H1 (cell line): ENCODE measurements at regions of chr15 and their contacts with region 1.

Region 1: DNA sequence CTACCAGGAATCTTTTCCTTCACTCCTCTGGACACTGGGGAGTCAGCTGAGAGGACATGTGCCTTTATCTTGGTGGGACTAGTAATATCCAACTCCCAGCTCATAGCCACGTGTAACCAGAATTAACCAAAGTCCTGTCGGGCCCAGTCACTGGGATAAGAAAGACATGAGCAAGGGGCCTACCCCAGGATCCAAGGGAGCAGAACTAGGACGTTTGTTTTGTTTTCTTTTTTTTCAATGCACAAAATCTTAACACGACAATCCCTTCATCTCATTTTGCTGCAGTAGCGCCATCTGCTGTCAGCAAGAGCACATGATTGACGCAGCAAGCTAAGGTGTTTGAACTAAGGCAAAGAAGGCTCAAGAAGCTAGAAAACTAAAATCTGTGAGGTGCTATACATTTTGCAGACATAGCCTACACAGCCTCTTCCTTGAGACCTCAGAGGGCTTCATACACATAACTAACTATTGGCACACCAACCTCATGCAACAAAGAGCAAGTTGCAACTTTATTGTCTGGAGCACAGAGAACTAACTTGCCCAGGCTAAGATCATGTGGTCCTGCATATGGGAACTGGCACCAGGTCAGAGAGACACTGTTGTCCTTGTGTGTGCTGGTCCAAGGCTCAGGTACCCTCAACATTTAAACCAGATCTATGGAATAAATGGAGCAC is 43.6 kb downstream of the RLBP1 start:
- DNase-seq: peak in 1 of 2 experiments; percentile 63
- H3K4me3 ChIP-seq: no peak overlapping the region
- H3K27ac ChIP-seq: no peak overlapping the region
- H3K4me1 ChIP-seq: no peaks in the 10 kb centered on the region
- H3K27me3 ChIP-seq: no peaks in the 10 kb centered on the region
- CTCF ChIP-seq: peak; percentile 41 to 90 (median 83)
- EP300 ChIP-seq: no peak
- POLR2A ChIP-seq: no peak
- RAD21 ChIP-seq: peak; percentile 86

Region 2: DNA sequence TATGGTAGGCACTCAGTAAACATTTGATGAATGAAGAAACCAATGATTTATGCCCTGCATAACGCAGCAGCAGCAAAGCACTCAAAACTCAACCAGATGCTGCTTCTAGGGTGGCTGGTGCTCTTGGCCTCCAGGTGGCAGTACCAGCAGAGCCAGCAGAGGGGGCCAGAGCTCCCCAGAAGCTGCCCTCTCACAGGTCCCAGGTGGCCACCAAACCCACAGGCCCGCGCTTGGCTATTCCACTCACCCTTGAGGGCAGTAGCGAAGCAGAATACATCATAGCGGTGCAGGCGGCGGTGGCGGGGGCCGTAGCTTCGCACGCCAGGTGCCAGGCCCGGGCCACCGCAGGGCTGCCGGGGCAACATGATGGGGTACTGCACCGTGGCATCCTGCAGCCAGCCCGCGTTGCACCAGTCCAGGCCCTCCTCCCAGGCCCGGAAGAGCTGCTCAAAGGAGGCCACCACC is 299.0 kb before region 1 on chr15:
- CTCF ChIA-PET with region 1: interaction called, 18 read pairs
- POLR2A ChIA-PET with region 1: no interaction called
- DNase-seq: peak in 1 of 2 experiments; percentile 89
- H3K4me3 ChIP-seq: no peak overlapping the region
- H3K27ac ChIP-seq: no peak overlapping the region
- H3K4me1 ChIP-seq: peaks cover 0 to 6% (median under 1%) of the 10 kb centered on the region in 4 experiments; a peak in 3 of 7 replicates
- H3K27me3 ChIP-seq: no peaks in the 10 kb centered on the region
- CTCF ChIP-seq: peak; percentile 89 to 96 (median 95)
- EP300 ChIP-seq: no peak
- POLR2A ChIP-seq: no peak
- RAD21 ChIP-seq: peak; percentile 80 to 87

Region 3: GRCh38 chr15:89143503-89144162 is 34.1 kb before region 1 on chr15:
- CTCF ChIA-PET with region 1: interaction called, 41 read pairs
- POLR2A ChIA-PET with region 1: no interaction called
- DNase-seq: no peak
- H3K4me3 ChIP-seq: no peak overlapping the region
- H3K27ac ChIP-seq: no peak overlapping the region
- H3K4me1 ChIP-seq: no peaks in the 10 kb centered on the region; a peak in 1 of 7 replicates
- H3K27me3 ChIP-seq: no peaks in the 10 kb centered on the region
- CTCF ChIP-seq: no peak
- EP300 ChIP-seq: no peak
- POLR2A ChIP-seq: no peak
- RAD21 ChIP-seq: no peak

Region 4: DNA sequence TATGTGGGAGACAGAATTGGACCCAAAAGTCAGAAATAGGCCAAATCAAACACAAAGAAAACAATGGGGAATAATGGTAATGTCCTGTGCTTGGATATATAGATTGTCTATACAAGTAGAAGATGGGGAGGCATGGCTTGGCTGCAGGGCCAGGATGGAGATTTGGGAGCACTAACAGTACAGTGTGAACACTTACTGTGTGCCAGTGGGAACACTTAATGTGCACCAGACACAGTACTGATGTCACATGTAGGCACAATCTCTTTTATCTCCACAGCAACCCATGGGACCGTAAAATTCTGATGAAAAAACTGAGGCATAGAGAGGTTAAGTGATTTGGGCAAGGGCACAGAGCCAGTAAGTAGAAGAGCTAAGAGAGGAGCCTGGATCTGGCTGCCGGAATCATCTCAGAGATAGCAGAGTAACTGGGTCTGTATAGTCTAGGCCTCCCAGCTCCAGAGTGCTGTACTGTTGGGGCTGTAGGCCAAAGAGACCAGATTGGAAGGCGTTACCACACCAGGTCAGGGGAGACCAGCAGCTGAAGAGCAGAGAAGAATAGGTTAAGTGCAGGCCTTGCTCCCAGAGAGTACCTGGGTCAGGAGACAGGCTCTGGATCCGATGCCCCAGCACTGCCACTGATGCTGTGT is 19.7 kb before region 1 on chr15:
- CTCF ChIA-PET with region 1: interaction called, 60 read pairs
- POLR2A ChIA-PET with region 1: no interaction called
- DNase-seq: no peak
- H3K4me3 ChIP-seq: no peak overlapping the region
- H3K27ac ChIP-seq: no peak overlapping the region
- H3K4me1 ChIP-seq: no peaks in the 10 kb centered on the region
- H3K27me3 ChIP-seq: no peaks in the 10 kb centered on the region
- CTCF ChIP-seq: no peak
- EP300 ChIP-seq: no peak
- POLR2A ChIP-seq: no peak
- RAD21 ChIP-seq: no peak

Region 5: GRCh38 chr15:89197503-89197971 is 19.8 kb after region 1 on chr15:
- CTCF ChIA-PET with region 1: interaction called, 36 read pairs
- POLR2A ChIA-PET with region 1: interaction called, 4 read pairs
- DNase-seq: peak in 1 of 2 experiments; percentile 73
- H3K4me3 ChIP-seq: peak overlapping the region in 1 of 4 experiments; percentile 4; a peak in 1 of 8 replicates
- H3K27ac ChIP-seq: no peak overlapping the region; the same call in 1 of the 2 replicates
- H3K4me1 ChIP-seq: peaks cover 8 to 34% (median 15%) of the 10 kb centered on the region in 4 experiments
- H3K27me3 ChIP-seq: no peaks in the 10 kb centered on the region
- CTCF ChIP-seq: no peak
- EP300 ChIP-seq: no peak
- POLR2A ChIP-seq: no peak
- RAD21 ChIP-seq: 0 out of 4 replicates have a peak, but pooled peaks of 1 of the 2 experiments have one; percentile 2

Region 6: DNA sequence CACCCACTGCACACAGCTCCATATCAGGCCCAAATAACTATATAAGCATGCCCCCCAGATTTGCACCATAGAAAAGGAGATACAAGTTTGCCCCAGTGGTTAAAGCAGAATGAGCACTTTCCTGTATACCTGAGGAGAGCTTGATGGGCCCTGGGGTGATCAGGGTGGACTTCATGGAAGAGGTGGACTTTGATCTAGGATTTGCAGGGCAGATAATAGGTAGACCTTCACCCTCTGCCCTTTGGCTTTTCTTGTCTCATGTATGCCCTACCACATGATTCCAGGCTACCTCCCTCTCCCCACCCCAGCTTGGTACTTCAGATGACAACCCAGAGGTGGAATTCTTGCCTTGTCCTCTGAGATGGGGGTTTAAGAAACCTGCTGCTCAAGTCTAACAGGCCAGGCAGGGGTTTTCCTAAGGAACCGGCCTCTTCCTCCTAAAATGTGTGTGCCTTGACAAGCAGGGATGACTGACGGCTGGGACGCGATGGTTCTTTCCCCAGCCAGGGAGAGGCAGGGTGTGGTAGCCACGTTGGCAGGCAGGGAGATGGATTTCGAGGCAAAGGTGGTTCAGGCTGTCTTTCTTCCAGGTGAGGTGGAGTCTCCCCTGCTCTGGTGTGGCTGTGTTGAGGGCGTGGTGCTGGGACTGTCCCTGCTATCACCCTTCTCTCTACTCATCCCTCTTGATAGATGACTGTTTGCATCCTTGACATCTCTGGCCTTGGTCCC is 325.3 kb after region 1 on chr15:
- CTCF ChIA-PET with region 1: no interaction called
- POLR2A ChIA-PET with region 1: no interaction called
- DNase-seq: no peak
- H3K4me3 ChIP-seq: no peak overlapping the region
- H3K27ac ChIP-seq: no peak overlapping the region
- H3K4me1 ChIP-seq: no peaks in the 10 kb centered on the region
- H3K27me3 ChIP-seq: no peaks in the 10 kb centered on the region
- CTCF ChIP-seq: no peak
- EP300 ChIP-seq: no peak
- POLR2A ChIP-seq: no peak
- RAD21 ChIP-seq: no peak